ENCODE measurements at regions of chr2 and their contacts with region 1.

Region 1: GRCh38 chr2:100902833-100903405 is 83.0 kb downstream of the NPAS2 start:
- DNase-seq: peak in 1 of 5 donors; percentile 45
- ATAC-seq: peak in 3 of 4 donors; percentile 29 to 59 (median 31)
- H3K4me3 ChIP-seq: no peak overlapping the region
- H3K27ac ChIP-seq: peak overlapping the region in 7 of 12 donors; percentile 9 to 46 (median 34)
- H3K4me1 ChIP-seq: peaks cover 0 to 62% (median 22%) of the 10 kb centered on the region in 12 donors
- H3K27me3 ChIP-seq: no peaks in the 10 kb centered on the region
- CTCF ChIP-seq: no peak
- POLR2A ChIP-seq: no peak

Region 2: DNA sequence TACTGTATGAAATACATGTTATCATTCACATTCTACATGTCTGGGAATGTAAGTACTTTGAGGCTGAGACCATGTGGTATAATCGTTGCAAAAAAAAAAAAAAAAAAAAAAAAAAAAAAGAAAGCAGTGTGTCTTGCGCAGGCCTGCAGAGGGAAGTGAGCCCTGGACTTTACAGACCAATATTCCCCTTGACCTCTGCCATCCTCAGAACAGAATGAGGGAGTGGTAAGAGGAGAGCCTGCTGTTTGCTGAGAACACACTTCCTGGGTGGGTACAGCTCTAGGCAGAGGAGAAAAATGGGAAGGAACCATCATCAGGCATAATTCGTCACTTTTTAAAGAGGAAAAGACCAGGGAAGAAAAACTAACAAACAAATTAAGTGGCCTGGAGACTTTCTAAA is 277.1 kb after region 1 on chr2:
- intact Hi-C with region 1: loop called in 1 of 10 experiments (anchors 5 kb)
- DNase-seq: peak in 1 of 5 donors; percentile 34
- ATAC-seq: peak; percentile 62 to 95 (median 80)
- H3K4me3 ChIP-seq: no peak overlapping the region
- H3K27ac ChIP-seq: peak overlapping the region in 3 of 12 donors; percentile 52 to 85 (median 61)
- H3K4me1 ChIP-seq: peaks cover 0 to 24% (median 0%) of the 10 kb centered on the region in 12 donors
- H3K27me3 ChIP-seq: no peaks in the 10 kb centered on the region
- CTCF ChIP-seq: no peak
- POLR2A ChIP-seq: no peak

Measured in heart left ventricle (tissue), 16 donors.